ENCODE measurements at regions of chr19 and their contacts with region 1.

Region 1: GRCh38 chr19:12495002-12495802 is 10.6 kb upstream of the ZNF709 start:
- DNase-seq: peak; percentile 95

Region 2: DNA sequence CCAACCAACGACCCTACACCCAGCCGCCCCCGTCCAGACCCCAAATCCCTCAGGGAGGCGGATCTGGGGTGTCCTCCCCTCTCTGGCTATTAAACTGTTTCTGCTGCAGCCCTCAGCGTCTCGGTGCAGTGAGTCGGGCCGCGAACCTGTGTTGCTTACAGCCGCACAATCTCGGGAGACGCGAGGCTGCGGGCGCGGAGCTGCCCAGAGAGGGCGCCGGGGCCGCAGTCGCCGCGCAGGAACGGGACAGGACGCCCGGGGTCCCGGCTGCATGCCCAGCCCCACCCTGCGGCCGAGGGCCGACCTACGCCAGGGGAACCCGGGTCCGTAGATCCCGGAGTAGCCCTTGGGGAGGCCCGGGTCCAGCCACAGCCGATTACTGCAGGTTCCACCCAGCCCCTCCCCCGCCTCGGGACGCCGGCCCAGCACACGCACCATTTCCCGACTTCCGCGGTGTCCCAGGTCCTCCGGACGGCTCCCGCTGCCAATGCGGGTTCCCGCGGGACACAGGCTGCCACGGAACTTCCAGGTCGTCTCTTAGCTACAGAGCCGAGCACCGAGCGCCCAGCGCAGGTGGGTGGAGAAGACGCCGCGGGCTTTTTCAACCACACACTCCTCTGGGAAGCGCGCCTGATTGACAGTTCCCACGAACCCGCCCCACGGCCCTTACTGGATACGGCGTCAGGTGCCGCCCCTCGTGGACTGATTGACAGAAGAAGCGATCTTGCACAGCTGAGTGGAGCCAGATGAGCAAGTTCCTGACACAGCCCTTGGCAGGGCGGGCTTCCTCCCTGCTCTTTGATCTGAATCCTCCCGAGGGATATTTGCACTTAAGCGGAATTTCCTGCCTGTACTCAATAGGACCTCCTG is 94.3 kb before region 1 on chr19 and contains the start of gene ZNF799:
- intact Hi-C with region 1: loop called (anchors 2 kb)
- DNase-seq: peak; percentile 99
- total RNA-seq, gene ZNF799: 1.9 TPM

Region 3: GRCh38 chr19:12551060-12551832 is 56.0 kb after region 1 on chr19 and contains the start of gene ZNF564:
- intact Hi-C with region 1: loop called (anchors 5 kb)
- DNase-seq: peak; percentile 98
- total RNA-seq, gene ZNF564: 9.3 TPM

Measured in cardiac septum (tissue), 1 donor.